ENCODE measurements at regions of chr11 and their contacts with region 1.

Region 1: DNA sequence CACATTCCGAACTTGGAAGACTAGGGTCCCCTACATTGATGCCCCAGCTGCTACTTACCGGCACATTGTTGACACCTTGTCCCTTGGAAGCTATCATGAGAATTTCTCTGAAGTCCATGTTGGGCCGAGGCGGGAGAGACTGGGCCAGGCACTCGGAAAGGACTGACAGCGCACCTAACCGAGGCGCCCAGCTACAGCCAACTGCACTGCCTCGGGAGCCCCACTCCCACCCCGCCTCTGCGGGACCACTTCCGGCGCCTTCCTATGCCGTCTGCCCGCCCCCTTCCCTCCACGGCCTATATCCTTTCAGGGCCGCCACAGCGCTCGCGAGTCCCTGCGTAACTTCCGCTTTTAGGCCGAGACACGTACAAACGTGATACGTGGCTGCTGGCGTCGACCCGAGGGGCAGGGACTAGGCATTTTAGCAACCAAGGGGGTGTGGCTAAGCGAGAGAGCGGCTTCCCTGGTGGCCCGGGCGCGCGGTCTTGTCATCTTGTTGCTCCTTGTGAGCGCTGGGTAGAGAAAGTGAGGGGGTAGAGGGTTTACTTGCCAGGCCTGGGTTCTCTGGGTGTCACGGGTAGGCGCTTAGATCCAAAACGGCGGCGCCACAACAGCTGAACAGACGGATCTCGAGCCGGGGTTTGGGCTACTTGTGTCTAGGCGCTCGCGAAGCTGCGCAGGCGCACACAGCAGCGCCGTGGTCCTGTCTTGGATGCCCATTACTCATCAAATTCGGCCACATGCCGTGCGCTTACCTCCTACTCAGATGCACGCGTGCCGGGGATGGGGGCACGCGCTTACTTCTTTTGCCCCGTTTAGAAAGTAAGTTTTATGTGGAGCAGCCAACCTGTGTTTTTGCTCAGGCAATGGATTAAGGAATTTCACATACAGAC is at the start of gene SPTY2D1:
- DNase-seq: peak; percentile 99
- ATAC-seq: peak; percentile 99
- H3K4me3 ChIP-seq: peak within 1 kb of the TSS; percentile 80 to 90 (median 84)
- H3K27ac ChIP-seq: peak within 1 kb of the TSS; percentile 84
- H3K4me1 ChIP-seq: peaks cover 12% of the 10 kb centered on the region
- H3K27me3 ChIP-seq: no peaks in the 10 kb centered on the region; a peak in 1 of 5 replicates
- CTCF ChIP-seq: 0 out of 2 replicates have a peak, but pooled peaks have one; percentile 11
- EP300 ChIP-seq: peak in 1 of 2 experiments; percentile 40; a peak in 1 of 4 replicates
- POLR2A ChIP-seq: peak; percentile 94
- RAD21 ChIP-seq: no peak; the same call in 1 of the 2 replicates
- total RNA-seq, gene SPTY2D1: 14.8 and 22.2 TPM in 2 replicates

Region 2: GRCh38 chr11:18578975-18579598 is 55.3 kb before region 1 on chr11:
- CTCF ChIA-PET with region 1: no interaction called
- POLR2A ChIA-PET with region 1: interaction called, 11 read pairs
- in situ Hi-C with region 1: no loop called
- intact Hi-C with region 1: no loop called
- DNase-seq: peak; percentile 93
- ATAC-seq: peak; percentile 98
- H3K4me3 ChIP-seq: peak overlapping the region; percentile 17 to 27 (median 24); a peak in 3 of 6 replicates
- H3K27ac ChIP-seq: peak overlapping the region; percentile 79
- H3K4me1 ChIP-seq: peaks cover 66% of the 10 kb centered on the region
- H3K27me3 ChIP-seq: no peaks in the 10 kb centered on the region
- CTCF ChIP-seq: no peak
- EP300 ChIP-seq: no peak; a peak in 1 of 4 replicates
- POLR2A ChIP-seq: no peak
- RAD21 ChIP-seq: no peak

Region 3: GRCh38 chr11:18588297-18589252 is 45.8 kb before region 1 on chr11 and contains the start of gene UEVLD:
- CTCF ChIA-PET with region 1: no interaction called
- POLR2A ChIA-PET with region 1: interaction called, 6 read pairs
- in situ Hi-C with region 1: loop called (anchors 5 kb)
- intact Hi-C with region 1: loop called (anchors 1 kb)
- DNase-seq: peak; percentile 81
- ATAC-seq: peak; percentile 93
- H3K4me3 ChIP-seq: peak within 1 kb of the TSS; percentile 82 to 89 (median 83)
- H3K27ac ChIP-seq: peak within 1 kb of the TSS; percentile 70
- H3K4me1 ChIP-seq: peaks cover 48% of the 10 kb centered on the region
- H3K27me3 ChIP-seq: no peaks in the 10 kb centered on the region
- CTCF ChIP-seq: peak; percentile 13
- EP300 ChIP-seq: 0 out of 4 replicates have a peak, but pooled peaks of 1 of the 2 experiments have one; percentile 34
- POLR2A ChIP-seq: peak; percentile 81 to 92
- RAD21 ChIP-seq: no peak
- total RNA-seq, gene UEVLD: 13.7 and 21.1 TPM in 2 replicates

Region 4: GRCh38 chr11:18594999-18595749 is 39.2 kb before region 1 on chr11:
- CTCF ChIA-PET with region 1: no interaction called
- POLR2A ChIA-PET with region 1: interaction called, 3 read pairs
- in situ Hi-C with region 1: loop called (anchors 5 kb)
- intact Hi-C with region 1: no loop called
- DNase-seq: no peak
- ATAC-seq: no peak
- H3K4me3 ChIP-seq: no peak overlapping the region
- H3K27ac ChIP-seq: no peak overlapping the region
- H3K4me1 ChIP-seq: peaks cover 28% of the 10 kb centered on the region
- H3K27me3 ChIP-seq: no peaks in the 10 kb centered on the region
- CTCF ChIP-seq: no peak
- EP300 ChIP-seq: no peak
- POLR2A ChIP-seq: no peak
- RAD21 ChIP-seq: no peak

Region 5: DNA sequence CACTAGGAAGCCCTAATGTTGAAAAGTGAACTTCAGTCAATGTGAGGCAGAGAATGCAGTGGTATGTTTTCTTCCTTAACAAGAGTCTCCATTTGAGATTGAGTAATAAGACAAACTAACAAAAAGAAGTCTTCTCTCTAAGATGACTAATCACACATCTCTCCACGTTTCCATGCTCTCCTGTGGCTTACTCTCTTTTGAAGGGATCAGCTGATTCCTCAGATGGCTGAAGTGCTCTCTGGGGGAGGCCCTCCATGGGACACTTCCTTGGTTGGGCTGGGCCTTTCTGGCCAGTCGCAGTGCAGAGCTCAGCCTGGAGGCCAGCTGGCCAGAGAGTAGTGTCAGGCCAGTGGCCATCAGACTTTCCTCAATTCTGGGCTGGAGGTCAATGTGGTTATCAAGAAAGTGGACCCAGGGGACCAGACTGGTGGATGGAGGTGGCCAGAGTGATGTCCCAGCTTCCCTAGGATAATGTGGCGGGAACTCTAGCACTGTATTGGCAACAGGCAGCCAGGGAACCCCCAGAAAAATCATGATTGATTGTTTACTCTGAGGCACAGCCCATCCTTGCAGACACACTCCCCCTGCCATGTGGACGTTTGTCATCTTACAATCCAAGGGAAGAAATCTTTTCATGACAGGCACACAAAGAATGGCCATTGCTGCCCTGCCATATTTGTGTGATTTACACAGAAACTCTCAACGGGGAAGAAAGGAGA is 552.9 kb after region 1 on chr11:
- CTCF ChIA-PET with region 1: no interaction called
- POLR2A ChIA-PET with region 1: no interaction called
- in situ Hi-C with region 1: no loop called
- intact Hi-C with region 1: no loop called
- DNase-seq: no peak
- ATAC-seq: no peak
- H3K4me3 ChIP-seq: no peak overlapping the region
- H3K27ac ChIP-seq: no peak overlapping the region
- H3K4me1 ChIP-seq: peaks cover 18% of the 10 kb centered on the region
- H3K27me3 ChIP-seq: peaks cover 0 to 2% of the 10 kb centered on the region in 2 experiments; a peak in 1 of 5 replicates
- CTCF ChIP-seq: no peak
- EP300 ChIP-seq: no peak
- POLR2A ChIP-seq: no peak
- RAD21 ChIP-seq: no peak

Region 6: GRCh38 chr11:19398772-19399527 is 764.6 kb after region 1 on chr11:
- CTCF ChIA-PET with region 1: no interaction called
- POLR2A ChIA-PET with region 1: no interaction called
- in situ Hi-C with region 1: no loop called
- intact Hi-C with region 1: no loop called
- DNase-seq: no peak
- ATAC-seq: peak; percentile 46; the same call in 1 of the 3 replicates
- H3K4me3 ChIP-seq: no peak overlapping the region
- H3K27ac ChIP-seq: no peak overlapping the region
- H3K4me1 ChIP-seq: no peaks in the 10 kb centered on the region
- H3K27me3 ChIP-seq: peaks cover 0 to 3% of the 10 kb centered on the region in 2 experiments; a peak in 4 of 5 replicates
- CTCF ChIP-seq: no peak
- EP300 ChIP-seq: no peak
- POLR2A ChIP-seq: no peak
- RAD21 ChIP-seq: no peak

Measured in HepG2 (cell line).